Uterus (tissue), 4 donors: ENCODE measurements at regions of chr16 and their contacts with region 1.

Region 1: DNA sequence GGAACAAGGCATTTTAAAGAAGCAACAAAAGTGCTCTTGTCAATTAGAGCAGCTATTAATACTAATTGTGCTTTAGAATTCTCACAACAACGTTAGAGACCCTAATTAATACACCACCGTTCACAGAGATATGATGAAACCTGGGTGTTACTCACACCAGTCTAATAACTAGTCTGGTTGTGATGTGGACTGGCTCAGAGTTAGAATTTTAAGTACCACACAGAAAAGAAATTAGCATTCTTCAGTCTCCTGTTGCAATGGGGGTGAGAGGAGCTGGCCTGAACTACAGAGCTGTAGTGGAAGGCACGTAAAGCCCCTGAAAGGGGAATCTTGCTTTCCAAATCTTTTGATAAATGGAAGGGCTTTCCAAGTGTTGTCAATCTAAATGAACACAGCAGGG is 240.8 kb upstream of the TOX3 start:
- DNase-seq: no peak
- H3K4me3 ChIP-seq: no peak overlapping the region
- H3K27ac ChIP-seq: no peak overlapping the region
- H3K4me1 ChIP-seq: no peaks in the 10 kb centered on the region
- H3K27me3 ChIP-seq: no peaks in the 10 kb centered on the region
- CTCF ChIP-seq: no peak
- POLR2A ChIP-seq: no peak

Region 2: GRCh38 chr16:52812678-52813556 is 25.2 kb after region 1 on chr16:
- intact Hi-C with region 1: loop called (anchors 1 kb)
- DNase-seq: no peak
- H3K4me3 ChIP-seq: no peak overlapping the region
- H3K27ac ChIP-seq: no peak overlapping the region
- H3K4me1 ChIP-seq: no peaks in the 10 kb centered on the region
- H3K27me3 ChIP-seq: no peaks in the 10 kb centered on the region
- CTCF ChIP-seq: no peak
- POLR2A ChIP-seq: no peak

Region 3: GRCh38 chr16:52914428-52914827 is 126.7 kb after region 1 on chr16:
- intact Hi-C with region 1: no loop called
- DNase-seq: no peak
- H3K4me3 ChIP-seq: no peak overlapping the region
- H3K27ac ChIP-seq: no peak overlapping the region
- H3K4me1 ChIP-seq: no peaks in the 10 kb centered on the region
- H3K27me3 ChIP-seq: no peaks in the 10 kb centered on the region
- CTCF ChIP-seq: no peak
- POLR2A ChIP-seq: no peak